Ovary (tissue), 10 donors: ENCODE measurements at regions of chr7 and their contacts with region 1.

Region 1: GRCh38 chr7:40057292-40057691 is 77.1 kb downstream of the MPLKIP start:
- DNase-seq: no peak
- H3K4me3 ChIP-seq: no peak overlapping the region
- H3K27ac ChIP-seq: no peak overlapping the region
- H3K4me1 ChIP-seq: no peaks in the 10 kb centered on the region
- H3K27me3 ChIP-seq: no peaks in the 10 kb centered on the region
- CTCF ChIP-seq: no peak
- EP300 ChIP-seq: no peak
- POLR2A ChIP-seq: no peak

Region 2: GRCh38 chr7:38916396-38916795 is 1140.9 kb before region 1 on chr7:
- intact Hi-C with region 1: no loop called
- DNase-seq: no peak
- H3K4me3 ChIP-seq: no peak overlapping the region
- H3K27ac ChIP-seq: no peak overlapping the region
- H3K4me1 ChIP-seq: no peaks in the 10 kb centered on the region
- H3K27me3 ChIP-seq: no peaks in the 10 kb centered on the region
- CTCF ChIP-seq: no peak
- EP300 ChIP-seq: no peak
- POLR2A ChIP-seq: no peak

Region 3: GRCh38 chr7:39880556-39880955 is 176.7 kb before region 1 on chr7:
- intact Hi-C with region 1: loop called in 1 of 4 experiments (anchors 5 kb)
- DNase-seq: no peak
- H3K4me3 ChIP-seq: no peak overlapping the region
- H3K27ac ChIP-seq: no peak overlapping the region
- H3K4me1 ChIP-seq: no peaks in the 10 kb centered on the region
- H3K27me3 ChIP-seq: no peaks in the 10 kb centered on the region
- CTCF ChIP-seq: no peak
- EP300 ChIP-seq: no peak
- POLR2A ChIP-seq: no peak

Region 4: GRCh38 chr7:39894904-39895303 is 162.4 kb before region 1 on chr7:
- intact Hi-C with region 1: loop called in 3 of 4 experiments (anchors 2 to 10 kb)
- DNase-seq: no peak
- H3K4me3 ChIP-seq: no peak overlapping the region
- H3K27ac ChIP-seq: no peak overlapping the region
- H3K4me1 ChIP-seq: no peaks in the 10 kb centered on the region
- H3K27me3 ChIP-seq: no peaks in the 10 kb centered on the region
- CTCF ChIP-seq: no peak
- EP300 ChIP-seq: no peak
- POLR2A ChIP-seq: no peak

Region 5: DNA sequence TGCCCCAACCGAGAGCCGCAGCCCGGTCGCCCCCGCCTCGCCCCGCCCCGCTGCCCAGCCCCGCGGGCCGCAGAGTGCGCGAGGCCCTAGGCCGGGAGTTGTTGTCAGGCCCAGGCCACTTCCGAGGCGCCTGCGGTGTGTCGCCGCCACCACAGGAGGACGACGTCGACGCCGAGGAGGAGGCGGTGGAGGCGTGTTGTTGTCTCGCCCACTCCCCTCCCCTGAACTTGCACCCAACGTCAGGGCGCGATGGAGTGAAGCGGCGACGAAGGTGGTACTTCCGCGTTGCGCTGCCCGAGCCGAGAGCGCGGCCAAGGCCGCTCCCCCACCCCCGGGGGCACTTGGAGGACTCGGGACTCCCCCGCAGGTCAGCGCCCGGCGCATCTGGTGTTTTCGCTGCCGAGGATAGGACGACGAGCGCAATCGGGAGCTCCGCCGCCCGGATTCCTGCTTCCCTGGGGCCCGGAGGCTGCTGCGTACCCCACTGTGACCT is 107.3 kb before region 1 on chr7 and contains the start of gene CDK13:
- intact Hi-C with region 1: loop called in 1 of 4 experiments (anchors 5 kb)
- DNase-seq: peak; percentile 78 to 91 (median 84)
- H3K4me3 ChIP-seq: peak within 1 kb of the TSS; percentile 92
- H3K27ac ChIP-seq: peak within 1 kb of the TSS; percentile 80 to 99
- H3K4me1 ChIP-seq: peaks cover 5% of the 10 kb centered on the region
- H3K27me3 ChIP-seq: no peaks in the 10 kb centered on the region
- CTCF ChIP-seq: no peak
- EP300 ChIP-seq: no peak
- POLR2A ChIP-seq: no peak
- total RNA-seq, gene CDK13: 62.7 to 124 (median 81.3) TPM